ENCODE measurements at regions of chr1 and their contacts with region 1.

Region 1: GRCh38 chr1:167105271-167106118 is 11.6 kb downstream of the STYXL2 start:
- DNase-seq: no peak
- ATAC-seq: no peak
- H3K4me3 ChIP-seq: no peak overlapping the region
- H3K4me3 Mint-ChIP-seq: peak overlapping the region in 7 of 10 donors; percentile 1 to 58 (median 13)
- H3K27ac ChIP-seq: no peak overlapping the region
- H3K27ac Mint-ChIP-seq: peak overlapping the region in 8 of 9 donors; percentile 23 to 87 (median 62)
- H3K4me1 ChIP-seq: peaks cover 5 to 29% of the 10 kb centered on the region in 2 donors
- H3K4me1 Mint-ChIP-seq: peaks cover 40 to 60% (median 56%) of the 10 kb centered on the region in 7 donors
- H3K27me3 ChIP-seq: no peaks in the 10 kb centered on the region
- H3K27me3 Mint-ChIP-seq: peaks cover 0 to 5% (median 0%) of the 10 kb centered on the region in 5 donors

Region 2: GRCh38 chr1:167090314-167090942 is 15.1 kb before region 1 on chr1 and contains the start of gene GPA33:
- CTCF ChIA-PET with region 1: interaction called, 4 read pairs
- POLR2A ChIA-PET with region 1: interaction called, 43 read pairs
- intact Hi-C with region 1: loop called in 1 of 2 experiments (anchors 2 kb)
- DNase-seq: peak in 7 of 9 donors; percentile 71 to 89 (median 83)
- ATAC-seq: peak; percentile 95
- H3K4me3 ChIP-seq: peak within 1 kb of the TSS; percentile 45
- H3K4me3 Mint-ChIP-seq: peak within 1 kb of the TSS in 9 of 10 donors; percentile 63 to 93 (median 86)
- H3K27ac ChIP-seq: peak within 1 kb of the TSS; percentile 83
- H3K27ac Mint-ChIP-seq: peak within 1 kb of the TSS; percentile 95 to 100 (median 100)
- H3K4me1 ChIP-seq: peaks cover 25 to 33% of the 10 kb centered on the region in 2 donors
- H3K4me1 Mint-ChIP-seq: peaks cover 18 to 80% (median 34%) of the 10 kb centered on the region in 7 donors
- H3K27me3 ChIP-seq: no peaks in the 10 kb centered on the region
- H3K27me3 Mint-ChIP-seq: no peaks in the 10 kb centered on the region
- total RNA-seq, gene GPA33: 5.4 to 32.6 (median 11.3) TPM

Measured in naive thymus-derived CD4-positive, alpha-beta T cell (primary cell).